Breast epithelium (tissue), 4 donors: ENCODE measurements at regions of chr21 and their contacts with region 1.

Region 1: DNA sequence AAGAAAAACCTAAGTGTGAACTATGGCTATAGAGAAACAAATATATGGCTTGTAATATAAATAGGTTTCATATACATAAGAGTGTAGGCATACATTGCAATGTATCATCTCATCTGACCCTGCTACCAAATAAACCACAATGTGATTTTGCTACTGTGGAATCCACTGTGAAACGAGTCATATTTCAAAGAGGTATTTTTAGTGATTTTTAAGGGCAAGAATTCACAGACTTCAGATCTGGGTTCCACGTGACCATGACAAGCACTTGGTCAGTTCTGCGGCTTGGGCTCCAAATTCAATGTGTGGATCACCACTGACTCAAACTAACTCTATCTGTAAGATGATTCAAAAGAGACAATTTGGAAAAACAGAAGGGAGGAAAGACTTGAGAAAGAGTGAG is 147.0 kb upstream of the ERG start:
- DNase-seq: no peak
- H3K4me3 ChIP-seq: no peak overlapping the region
- H3K27ac ChIP-seq: no peak overlapping the region
- H3K4me1 ChIP-seq: no peaks in the 10 kb centered on the region
- H3K27me3 ChIP-seq: peaks cover 0 to 5% of the 10 kb centered on the region in 2 donors
- CTCF ChIP-seq: no peak
- POLR2A ChIP-seq: no peak

Region 2: GRCh38 chr21:38054334-38054733 is 590.9 kb before region 1 on chr21:
- intact Hi-C with region 1: no loop called
- DNase-seq: no peak
- H3K4me3 ChIP-seq: no peak overlapping the region
- H3K27ac ChIP-seq: no peak overlapping the region
- H3K4me1 ChIP-seq: no peaks in the 10 kb centered on the region
- H3K27me3 ChIP-seq: no peaks in the 10 kb centered on the region
- CTCF ChIP-seq: no peak
- POLR2A ChIP-seq: no peak

Region 3: GRCh38 chr21:38661197-38661871 is 16.1 kb after region 1 on chr21:
- intact Hi-C with region 1: no loop called
- DNase-seq: no peak
- H3K4me3 ChIP-seq: peak overlapping the region; percentile 52 to 81 (median 60)
- H3K27ac ChIP-seq: peak overlapping the region; percentile 69 to 70
- H3K4me1 ChIP-seq: peaks cover 0 to 2% of the 10 kb centered on the region in 2 donors
- H3K27me3 ChIP-seq: peaks cover 3 to 47% of the 10 kb centered on the region in 2 donors
- CTCF ChIP-seq: no peak
- POLR2A ChIP-seq: no peak

Region 4: GRCh38 chr21:38793926-38794713 is 148.8 kb after region 1 on chr21:
- intact Hi-C with region 1: loop called (anchors 5 kb)
- DNase-seq: no peak
- H3K4me3 ChIP-seq: no peak overlapping the region
- H3K27ac ChIP-seq: no peak overlapping the region
- H3K4me1 ChIP-seq: no peaks in the 10 kb centered on the region
- H3K27me3 ChIP-seq: no peaks in the 10 kb centered on the region
- CTCF ChIP-seq: no peak
- POLR2A ChIP-seq: no peak